Thyroid gland (tissue), 4 donors: ENCODE measurements at regions of chr3 and their contacts with region 1.

Region 1: GRCh38 chr3:45760878-45761711 is 35.2 kb downstream of the SLC6A20 start:
- DNase-seq: peak; percentile 54 to 63
- H3K4me3 ChIP-seq: no peak overlapping the region
- H3K27ac ChIP-seq: no peak overlapping the region
- H3K4me1 ChIP-seq: peaks cover 0 to 2% of the 10 kb centered on the region in 2 donors
- H3K27me3 ChIP-seq: no peaks in the 10 kb centered on the region
- CTCF ChIP-seq: peak; percentile 31 to 82 (median 70)
- POLR2A ChIP-seq: no peak

Region 2: DNA sequence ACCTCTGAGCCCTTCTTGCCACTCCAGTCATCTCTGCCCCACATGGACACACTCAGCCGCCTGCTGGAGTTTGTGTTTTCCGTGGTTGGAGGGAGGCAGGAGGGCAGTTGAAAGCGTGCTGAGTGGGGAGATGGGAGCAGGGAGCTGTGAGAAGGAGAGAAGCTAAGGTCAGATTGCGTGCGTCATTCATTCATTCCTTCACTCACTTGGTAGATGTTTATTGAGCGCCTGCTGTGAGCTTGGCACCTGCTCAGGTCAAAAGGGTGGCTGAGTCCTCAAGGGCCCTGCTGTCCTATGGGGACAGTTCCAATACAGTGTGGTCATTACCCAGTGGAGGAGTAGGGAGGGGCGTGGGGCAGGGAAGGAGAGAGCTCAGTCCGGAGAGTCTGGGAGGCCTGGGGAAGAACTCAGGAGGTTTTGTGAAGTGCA is 143.0 kb before region 1 on chr3:
- intact Hi-C with region 1: no loop called
- DNase-seq: peak; percentile 92
- H3K4me3 ChIP-seq: no peak overlapping the region
- H3K27ac ChIP-seq: peak overlapping the region; percentile 81 to 94 (median 87)
- H3K4me1 ChIP-seq: peaks cover 72 to 76% of the 10 kb centered on the region in 2 donors
- H3K27me3 ChIP-seq: no peaks in the 10 kb centered on the region
- CTCF ChIP-seq: no peak
- POLR2A ChIP-seq: peak in 1 of 2 donors; percentile 48

Region 3: GRCh38 chr3:45832691-45833090 is 71.6 kb after region 1 on chr3:
- intact Hi-C with region 1: loop called (anchors 10 kb)
- DNase-seq: no peak
- H3K4me3 ChIP-seq: no peak overlapping the region
- H3K27ac ChIP-seq: no peak overlapping the region
- H3K4me1 ChIP-seq: no peaks in the 10 kb centered on the region
- H3K27me3 ChIP-seq: no peaks in the 10 kb centered on the region
- CTCF ChIP-seq: peak in 2 of 6 experiments; percentile 9 to 15
- POLR2A ChIP-seq: no peak

Region 4: DNA sequence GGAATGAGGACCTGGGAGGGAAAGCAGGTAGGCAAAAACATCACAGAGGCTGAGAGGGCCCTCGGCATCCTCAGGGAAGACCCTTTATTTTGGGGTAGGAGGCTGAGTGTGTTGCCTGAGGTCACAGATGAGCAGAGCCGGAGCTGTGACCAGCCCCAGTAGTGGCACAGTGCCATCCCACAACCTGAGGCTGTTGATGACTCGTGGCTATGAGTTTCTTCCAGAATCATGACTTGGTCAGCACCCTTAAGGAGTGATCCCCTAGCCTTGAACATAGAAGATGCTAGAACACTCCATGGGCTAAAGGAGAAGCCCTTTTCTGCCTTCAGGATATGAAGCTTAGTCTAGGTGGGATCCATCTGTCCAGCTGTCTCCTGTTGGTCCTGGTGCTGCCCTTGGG is 162.7 kb after region 1 on chr3:
- intact Hi-C with region 1: loop called (anchors 5 kb)
- DNase-seq: no peak
- H3K4me3 ChIP-seq: no peak overlapping the region
- H3K27ac ChIP-seq: no peak overlapping the region
- H3K4me1 ChIP-seq: no peaks in the 10 kb centered on the region
- H3K27me3 ChIP-seq: no peaks in the 10 kb centered on the region
- CTCF ChIP-seq: no peak
- POLR2A ChIP-seq: no peak

Region 5: GRCh38 chr3:46078712-46079400 is 317.8 kb after region 1 on chr3:
- intact Hi-C with region 1: loop called (anchors 2 kb)
- DNase-seq: peak; percentile 94 to 96
- H3K4me3 ChIP-seq: no peak overlapping the region
- H3K27ac ChIP-seq: no peak overlapping the region
- H3K4me1 ChIP-seq: peaks cover 0 to 4% of the 10 kb centered on the region in 2 donors
- H3K27me3 ChIP-seq: no peaks in the 10 kb centered on the region
- CTCF ChIP-seq: peak; percentile 94 to 100 (median 98)
- POLR2A ChIP-seq: no peak